Activated CD8-positive, alpha-beta T cell treated with anti-CD3 and anti-CD28 coated beads for 36 hours (primary cell): ENCODE measurements at regions of chr13 and their contacts with region 1.

Region 1: DNA sequence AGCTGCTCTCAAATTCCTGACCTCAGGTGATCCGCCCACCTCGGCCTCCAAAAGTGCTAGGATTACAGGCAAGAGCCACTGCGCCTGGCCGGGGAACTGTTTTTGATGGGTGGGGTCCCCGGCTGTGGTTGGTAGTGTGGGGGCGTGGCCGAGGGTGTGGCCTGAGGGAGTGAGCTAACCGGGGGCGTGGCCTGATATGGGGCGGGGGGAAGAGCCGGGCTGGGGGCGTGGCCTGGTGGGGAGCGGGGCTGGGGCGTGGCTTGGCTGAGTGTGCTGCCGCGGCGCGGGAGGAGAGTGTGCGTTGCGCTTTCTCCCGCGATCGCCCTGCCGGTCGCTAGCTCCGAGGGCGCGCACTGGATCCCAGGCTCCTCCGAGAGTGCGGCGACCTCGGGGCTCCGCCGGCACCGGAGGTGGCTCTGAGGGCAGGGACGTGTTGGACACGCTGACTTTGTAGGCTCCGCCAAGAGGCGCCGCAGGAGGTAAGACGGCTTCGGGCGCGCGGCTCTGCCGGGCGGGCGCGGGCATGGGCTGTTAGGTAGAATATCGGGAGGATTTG is at the start of gene SPATA13:
- DNase-seq: peak; percentile 95
- ATAC-seq: peak; percentile 96
- H3K4me3 Mint-ChIP-seq: peak within 1 kb of the TSS; percentile 89
- H3K27ac Mint-ChIP-seq: peak within 1 kb of the TSS; percentile 74
- H3K4me1 Mint-ChIP-seq: peaks cover 21% of the 10 kb centered on the region
- H3K27me3 Mint-ChIP-seq: no peaks in the 10 kb centered on the region
- CTCF ChIP-seq: no peak
- total RNA-seq, gene SPATA13: 47.0 to 47.4 TPM

Region 2: DNA sequence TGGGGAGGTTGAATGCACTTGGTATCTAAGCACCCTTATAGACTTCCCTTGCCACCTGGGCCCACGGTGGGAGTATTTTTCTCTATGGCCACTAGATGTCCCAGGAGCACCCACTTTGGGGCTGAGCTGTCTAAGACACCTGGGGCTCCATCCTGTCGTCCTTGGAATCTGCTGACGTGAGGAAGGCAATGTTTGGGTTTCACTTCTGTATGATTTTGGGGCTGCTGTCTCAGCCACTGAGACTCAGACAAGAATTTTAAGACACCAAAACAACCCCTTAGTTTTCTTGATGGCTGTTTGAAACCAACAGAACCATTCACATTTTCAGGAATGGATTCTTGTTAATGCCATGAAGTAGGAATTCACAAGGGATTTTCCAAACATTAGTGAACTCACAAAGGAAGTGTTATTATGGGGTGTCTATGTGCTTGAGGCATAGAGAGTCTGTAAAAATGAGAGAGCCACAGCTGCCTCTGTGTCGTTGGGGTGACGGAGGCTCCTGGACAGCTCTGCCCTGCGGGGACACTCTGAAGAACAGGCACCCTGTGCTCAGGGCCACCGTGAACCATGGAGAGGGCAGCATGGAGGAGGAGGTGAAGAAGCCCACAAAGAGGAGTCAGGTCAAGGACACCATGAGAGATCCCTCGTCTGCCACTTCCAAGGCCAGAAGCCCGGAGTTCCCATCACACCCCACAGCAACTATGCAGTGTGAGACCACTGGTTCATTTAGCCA is 106.8 kb before region 1 on chr13:
- CTCF ChIA-PET with region 1: interaction called, 14 read pairs
- POLR2A ChIA-PET with region 1: interaction called, 7 read pairs
- intact Hi-C with region 1: no loop called
- DNase-seq: peak; percentile 77
- ATAC-seq: peak; percentile 98
- H3K4me3 Mint-ChIP-seq: no peak overlapping the region
- H3K27ac Mint-ChIP-seq: no peak overlapping the region
- H3K4me1 Mint-ChIP-seq: peaks cover 8% of the 10 kb centered on the region
- H3K27me3 Mint-ChIP-seq: peaks cover 1% of the 10 kb centered on the region
- CTCF ChIP-seq: peak; percentile 85

Region 3: GRCh38 chr13:24097064-24097463 is 63.5 kb before region 1 on chr13:
- CTCF ChIA-PET with region 1: no interaction called
- POLR2A ChIA-PET with region 1: interaction called, 13 read pairs
- intact Hi-C with region 1: loop called (anchors 5 kb)
- DNase-seq: peak; percentile 83
- ATAC-seq: peak; percentile 93
- H3K4me3 Mint-ChIP-seq: peak overlapping the region; percentile 3
- H3K27ac Mint-ChIP-seq: peak overlapping the region; percentile 56
- H3K4me1 Mint-ChIP-seq: peaks cover 18% of the 10 kb centered on the region
- H3K27me3 Mint-ChIP-seq: peaks cover 8% of the 10 kb centered on the region
- CTCF ChIP-seq: no peak

Region 4: DNA sequence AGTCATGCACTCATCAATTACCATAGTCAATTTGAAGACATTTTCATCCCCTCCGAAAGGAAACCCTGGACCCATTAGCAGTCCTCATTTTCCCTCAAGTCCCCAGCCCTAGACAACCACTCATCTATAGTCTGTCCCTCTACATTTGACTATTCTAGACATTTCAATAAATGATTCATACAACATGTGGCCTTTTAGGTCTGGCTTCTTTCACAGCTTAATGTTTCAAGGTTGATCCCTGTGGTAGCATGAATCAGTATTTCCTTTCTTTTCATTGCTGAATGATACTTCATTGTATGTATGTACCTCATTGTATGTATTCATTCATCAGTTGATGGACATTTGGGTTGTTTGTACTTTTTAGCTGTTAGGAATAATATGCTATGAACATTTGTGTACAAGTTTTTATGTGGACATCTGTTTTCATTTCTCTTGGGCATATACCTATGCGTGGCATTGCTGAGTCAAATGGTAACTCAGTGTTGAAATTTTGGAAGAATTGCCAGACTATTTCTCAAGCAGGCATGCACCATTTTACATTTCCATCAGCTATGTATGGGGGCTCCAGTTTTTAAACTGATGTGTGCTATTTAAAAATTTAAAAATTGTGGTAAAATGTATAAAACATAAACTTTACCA is 18.4 kb after region 1 on chr13:
- CTCF ChIA-PET with region 1: interaction called, 10 read pairs
- POLR2A ChIA-PET with region 1: interaction called, 22 read pairs
- intact Hi-C with region 1: no loop called
- DNase-seq: peak; percentile 15
- ATAC-seq: peak; percentile 96
- H3K4me3 Mint-ChIP-seq: no peak overlapping the region
- H3K27ac Mint-ChIP-seq: peak overlapping the region; percentile 85
- H3K4me1 Mint-ChIP-seq: peaks cover 65% of the 10 kb centered on the region
- H3K27me3 Mint-ChIP-seq: no peaks in the 10 kb centered on the region
- CTCF ChIP-seq: no peak

Region 5: GRCh38 chr13:24187185-24187584 is 26.7 kb after region 1 on chr13:
- CTCF ChIA-PET with region 1: interaction called, 4 read pairs
- POLR2A ChIA-PET with region 1: interaction called, 22 read pairs
- intact Hi-C with region 1: no loop called
- DNase-seq: peak; percentile 48
- ATAC-seq: peak; percentile 94
- H3K4me3 Mint-ChIP-seq: no peak overlapping the region
- H3K27ac Mint-ChIP-seq: peak overlapping the region; percentile 81
- H3K4me1 Mint-ChIP-seq: peaks cover 47% of the 10 kb centered on the region
- H3K27me3 Mint-ChIP-seq: no peaks in the 10 kb centered on the region
- CTCF ChIP-seq: no peak